OCI-LY7 (cell line): ENCODE measurements at regions of chr12 and their contacts with region 1.

Region 1: DNA sequence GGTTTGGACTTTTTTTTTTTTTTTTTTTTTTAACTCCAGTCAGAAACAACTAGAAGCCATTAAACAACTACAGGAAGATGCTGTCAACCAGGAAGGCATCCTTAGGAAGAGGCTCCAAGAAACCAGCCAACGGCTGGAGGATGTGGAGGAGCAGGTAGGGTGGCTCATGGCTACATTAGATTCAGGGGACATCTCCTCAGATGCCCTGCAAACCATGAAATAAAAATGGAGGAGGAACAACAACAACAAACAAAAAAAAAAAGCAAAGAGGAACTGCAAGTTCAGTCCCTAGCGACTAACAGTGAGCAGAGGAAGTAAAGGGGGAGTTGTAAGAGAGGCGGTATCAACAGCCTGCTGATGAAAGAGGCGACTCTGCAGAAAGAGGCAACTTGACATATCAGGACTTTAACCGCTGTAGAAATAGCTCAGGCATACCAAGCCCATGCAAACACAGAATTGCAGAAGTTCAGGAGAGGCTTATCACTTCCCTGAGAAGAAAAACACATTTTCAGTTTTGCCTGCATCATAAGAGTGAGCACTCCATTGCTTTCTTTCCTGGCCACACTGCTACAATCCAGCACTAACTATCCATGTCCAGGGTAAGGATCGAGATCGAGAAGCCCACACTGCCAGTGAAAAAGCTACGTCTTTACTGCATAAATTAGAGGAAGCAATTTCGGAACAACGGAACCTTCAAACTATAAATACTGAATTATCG is 103.5 kb upstream of the BCAT1 start:
- DNase-seq: peak; percentile 95
- H3K4me3 ChIP-seq: peak overlapping the region; percentile 90
- H3K27ac ChIP-seq: peak overlapping the region; percentile 94
- H3K4me1 ChIP-seq: peaks cover 21% of the 10 kb centered on the region
- CTCF ChIP-seq: no peak; the same call in 1 of the 2 replicates

Region 2: GRCh38 chr12:24948757-24949722 is 103.3 kb before region 1 on chr12 and contains the start of gene BCAT1:
- CTCF ChIA-PET with region 1: interaction called, 3 read pairs
- POLR2A ChIA-PET with region 1: interaction called, 5 read pairs
- intact Hi-C with region 1: loop called (anchors 5 kb)
- DNase-seq: peak; percentile 93
- H3K4me3 ChIP-seq: peak within 1 kb of the TSS; percentile 79
- H3K27ac ChIP-seq: peak within 1 kb of the TSS; percentile 70
- H3K4me1 ChIP-seq: peaks cover 59% of the 10 kb centered on the region
- CTCF ChIP-seq: peak; percentile 49; the same call in 1 of the 2 replicates
- total RNA-seq, gene BCAT1: 116 and 121 TPM in 2 replicates

Region 3: DNA sequence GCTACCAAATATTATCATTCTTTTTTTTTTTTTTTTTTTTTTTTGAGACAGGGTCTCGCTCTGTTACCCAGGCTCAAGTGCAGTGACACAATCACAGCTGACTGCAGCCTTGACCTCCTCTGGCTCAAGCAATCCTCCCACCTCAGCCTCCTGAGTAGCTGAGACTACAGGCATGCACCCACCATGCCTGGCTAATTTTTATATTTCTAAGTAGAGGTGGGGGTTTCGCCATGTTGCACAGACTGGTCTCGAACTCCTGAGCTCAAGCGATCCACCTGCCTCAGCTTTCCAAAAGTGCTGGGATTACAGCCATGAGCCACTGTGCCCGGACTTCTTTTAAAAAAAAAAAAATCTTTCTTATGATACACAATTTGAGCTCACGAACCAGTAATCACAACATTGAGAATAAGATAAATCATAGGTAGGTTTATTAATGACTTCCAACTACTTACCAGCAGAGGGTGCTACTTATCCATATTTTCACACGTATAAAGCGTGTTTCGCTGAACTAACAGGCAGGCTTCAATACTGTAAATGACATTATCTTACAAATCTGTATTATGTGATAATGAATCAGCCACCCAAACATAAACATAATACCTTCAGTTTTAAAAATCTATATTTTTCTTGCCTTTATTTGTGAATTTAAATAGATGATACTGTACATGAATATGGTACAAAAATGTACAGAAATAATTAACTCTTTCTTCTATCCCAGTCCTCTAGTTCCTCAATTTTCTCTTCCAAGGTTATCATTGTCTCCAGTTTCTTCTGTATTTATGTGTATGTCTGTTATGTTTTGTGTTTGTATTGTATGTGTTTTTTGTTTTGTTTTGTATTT is 60.9 kb before region 1 on chr12:
- CTCF ChIA-PET with region 1: interaction called, 12 read pairs
- POLR2A ChIA-PET with region 1: interaction called, 911 read pairs
- intact Hi-C with region 1: no loop called
- DNase-seq: peak; percentile 90
- H3K4me3 ChIP-seq: no peak overlapping the region
- H3K27ac ChIP-seq: peak overlapping the region; percentile 73
- H3K4me1 ChIP-seq: peaks cover 58% of the 10 kb centered on the region
- CTCF ChIP-seq: peak; percentile 94

Region 4: DNA sequence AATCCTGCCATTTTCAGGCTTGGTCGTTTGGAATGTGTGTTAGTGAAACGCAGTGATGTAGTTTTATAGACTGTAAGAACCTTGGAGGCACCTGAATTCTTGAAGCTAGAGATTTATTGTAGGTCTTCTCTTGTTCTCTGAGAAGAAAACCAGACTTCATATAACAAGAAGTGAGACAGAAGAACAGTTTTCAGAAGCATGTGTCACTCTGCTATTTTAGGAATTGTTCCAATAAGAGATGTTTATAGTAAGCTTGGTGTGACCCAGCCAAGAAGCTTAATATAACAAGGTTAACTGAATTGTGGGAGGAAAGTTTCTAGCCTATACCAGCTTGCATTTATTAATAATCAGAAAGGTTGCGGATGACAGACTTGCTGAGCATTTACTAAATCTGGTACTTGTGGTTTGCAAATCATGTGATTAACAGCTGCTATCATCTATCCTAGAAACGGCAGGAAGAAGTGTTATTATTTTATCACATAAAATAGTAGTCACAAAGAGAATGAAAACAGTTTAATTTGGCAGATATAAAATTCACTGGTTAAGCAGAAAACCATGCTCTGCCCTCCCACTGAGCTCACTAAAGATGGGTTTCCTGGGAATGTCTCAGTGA is 54.3 kb before region 1 on chr12:
- CTCF ChIA-PET with region 1: interaction called, 12 read pairs
- POLR2A ChIA-PET with region 1: interaction called, 911 read pairs
- intact Hi-C with region 1: loop called (anchors 1 kb)
- DNase-seq: peak; percentile 96
- H3K4me3 ChIP-seq: peak overlapping the region; percentile 63
- H3K27ac ChIP-seq: peak overlapping the region; percentile 98
- H3K4me1 ChIP-seq: peaks cover 98% of the 10 kb centered on the region
- CTCF ChIP-seq: no peak

Region 5: GRCh38 chr12:25005376-25005775 is 47.0 kb before region 1 on chr12:
- CTCF ChIA-PET with region 1: no interaction called
- POLR2A ChIA-PET with region 1: interaction called, 911 read pairs
- intact Hi-C with region 1: no loop called
- DNase-seq: peak; percentile 76
- H3K4me3 ChIP-seq: peak overlapping the region; percentile 30
- H3K27ac ChIP-seq: peak overlapping the region; percentile 90
- H3K4me1 ChIP-seq: peaks cover 86% of the 10 kb centered on the region
- CTCF ChIP-seq: peak; percentile 61

Region 6: DNA sequence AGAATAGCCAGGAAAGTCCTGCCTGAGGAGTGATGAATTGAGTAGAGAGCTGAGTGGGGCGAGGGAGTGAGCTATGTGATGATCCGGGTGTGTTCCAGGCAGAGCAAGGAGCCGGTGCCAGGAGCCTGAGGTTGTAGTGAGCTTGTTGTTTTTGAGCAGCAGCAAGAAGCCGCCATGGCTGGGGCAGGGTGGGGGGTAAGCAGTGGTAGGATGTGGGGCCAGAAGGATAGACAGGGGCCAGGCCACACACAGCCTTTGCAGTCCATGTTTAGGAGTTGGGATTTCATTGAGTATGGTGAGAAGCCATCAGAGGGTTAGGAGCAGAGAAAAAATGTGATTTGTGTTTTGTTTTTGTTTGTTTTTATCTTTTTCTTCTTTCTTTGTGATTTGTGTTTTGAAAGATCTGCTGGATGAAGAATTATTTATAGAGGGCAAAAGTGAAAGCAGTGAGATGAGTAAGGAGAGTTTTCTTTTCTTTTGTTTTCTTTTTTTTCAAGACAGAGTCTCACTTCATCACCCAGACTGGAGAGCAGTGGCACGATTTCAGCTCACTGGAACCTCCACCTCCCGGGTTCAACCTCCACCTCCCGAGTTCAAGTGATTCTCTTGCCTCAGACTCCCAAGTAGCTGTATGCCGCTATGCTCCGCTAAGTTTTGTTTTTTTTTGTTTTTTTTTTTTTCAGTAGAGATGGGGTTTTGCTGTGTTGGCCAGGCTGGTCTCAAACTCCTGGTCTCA is 11.2 kb before region 1 on chr12:
- CTCF ChIA-PET with region 1: no interaction called
- POLR2A ChIA-PET with region 1: interaction called, 63 read pairs
- intact Hi-C with region 1: no loop called
- DNase-seq: no peak
- H3K4me3 ChIP-seq: no peak overlapping the region
- H3K27ac ChIP-seq: no peak overlapping the region
- H3K4me1 ChIP-seq: no peaks in the 10 kb centered on the region
- CTCF ChIP-seq: no peak

Region 7: DNA sequence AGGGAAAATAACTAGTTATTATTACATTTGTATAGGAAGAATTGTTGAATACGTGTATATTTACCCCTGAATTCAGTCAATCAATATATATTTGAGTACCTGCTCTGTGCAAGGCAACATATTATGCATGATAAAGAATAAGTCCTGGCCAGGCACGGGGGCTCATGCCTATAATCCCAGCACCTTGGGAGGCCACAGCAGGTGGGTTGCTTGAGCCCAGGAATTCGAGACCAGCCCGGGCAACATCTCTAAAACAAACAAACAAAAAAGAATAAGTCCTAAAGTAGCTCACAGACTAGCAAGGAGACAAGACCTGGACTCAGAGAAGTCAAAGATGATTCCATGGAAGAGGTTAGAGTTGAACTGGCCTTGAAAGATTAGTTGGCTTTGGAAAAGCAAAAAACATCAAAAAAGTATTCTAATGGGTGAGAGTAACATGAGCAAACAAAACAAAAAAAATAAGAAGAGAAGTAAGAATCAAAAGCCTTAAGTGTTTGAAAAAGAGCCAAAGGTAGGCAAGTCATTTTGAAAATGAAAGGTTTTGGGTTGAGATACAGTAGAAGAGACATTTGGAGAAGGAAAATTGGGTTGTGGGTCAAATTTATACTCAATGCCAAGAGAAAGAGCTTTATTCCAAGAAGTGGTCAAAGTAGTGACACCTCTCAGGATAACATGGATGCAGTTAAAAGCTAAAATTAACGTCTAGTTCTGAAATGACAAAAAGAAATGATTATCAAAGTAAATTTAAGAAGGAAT is 11.7 kb after region 1 on chr12:
- CTCF ChIA-PET with region 1: interaction called, 4 read pairs
- POLR2A ChIA-PET with region 1: interaction called, 33 read pairs
- intact Hi-C with region 1: no loop called
- DNase-seq: no peak
- H3K4me3 ChIP-seq: no peak overlapping the region
- H3K27ac ChIP-seq: no peak overlapping the region
- H3K4me1 ChIP-seq: peaks cover 47% of the 10 kb centered on the region
- CTCF ChIP-seq: no peak

Region 8: DNA sequence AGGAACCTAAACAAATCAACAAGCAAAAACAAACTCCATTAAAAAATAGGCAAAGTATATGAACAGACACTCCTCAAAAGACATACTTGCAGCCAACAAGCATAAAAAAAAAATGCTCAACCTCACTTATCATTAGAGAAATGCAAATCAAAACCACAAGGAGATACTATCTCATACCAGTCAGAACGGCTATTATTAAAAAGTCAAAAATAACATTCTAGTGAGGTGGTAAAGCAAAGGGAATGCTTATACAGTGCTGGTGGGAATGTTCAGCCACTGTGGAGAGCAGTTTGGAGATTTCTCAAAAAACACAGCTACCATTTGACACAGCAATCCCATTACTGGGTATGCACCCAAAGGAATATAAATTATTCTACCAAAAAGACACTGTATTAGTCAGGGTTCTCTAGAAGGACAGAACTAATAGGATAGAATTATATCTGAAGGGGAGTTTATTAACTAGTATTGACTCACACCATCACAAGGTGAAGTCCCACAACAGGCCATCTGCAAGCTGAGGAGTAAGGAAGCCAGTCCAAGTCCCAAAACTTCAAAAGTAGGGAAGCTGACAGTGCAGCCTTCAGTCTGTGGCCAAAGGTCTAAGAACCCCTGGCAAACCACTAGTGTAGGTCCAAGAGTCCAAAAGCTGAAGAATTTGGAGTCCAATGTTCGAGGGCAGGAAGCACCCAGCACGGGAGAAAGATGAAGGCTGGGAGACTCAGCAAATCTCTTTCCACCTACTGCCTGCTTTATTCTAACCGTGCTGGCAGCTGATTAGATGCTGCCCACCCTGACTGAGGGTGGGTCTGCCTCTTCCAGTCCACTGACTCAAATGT is 299.9 kb after region 1 on chr12:
- CTCF ChIA-PET with region 1: no interaction called
- POLR2A ChIA-PET with region 1: no interaction called
- intact Hi-C with region 1: no loop called
- DNase-seq: no peak
- H3K4me3 ChIP-seq: no peak overlapping the region
- H3K27ac ChIP-seq: no peak overlapping the region
- H3K4me1 ChIP-seq: no peaks in the 10 kb centered on the region
- CTCF ChIP-seq: no peak